ENCODE measurements at regions of chr12 and their contacts with region 1.

Region 1: DNA sequence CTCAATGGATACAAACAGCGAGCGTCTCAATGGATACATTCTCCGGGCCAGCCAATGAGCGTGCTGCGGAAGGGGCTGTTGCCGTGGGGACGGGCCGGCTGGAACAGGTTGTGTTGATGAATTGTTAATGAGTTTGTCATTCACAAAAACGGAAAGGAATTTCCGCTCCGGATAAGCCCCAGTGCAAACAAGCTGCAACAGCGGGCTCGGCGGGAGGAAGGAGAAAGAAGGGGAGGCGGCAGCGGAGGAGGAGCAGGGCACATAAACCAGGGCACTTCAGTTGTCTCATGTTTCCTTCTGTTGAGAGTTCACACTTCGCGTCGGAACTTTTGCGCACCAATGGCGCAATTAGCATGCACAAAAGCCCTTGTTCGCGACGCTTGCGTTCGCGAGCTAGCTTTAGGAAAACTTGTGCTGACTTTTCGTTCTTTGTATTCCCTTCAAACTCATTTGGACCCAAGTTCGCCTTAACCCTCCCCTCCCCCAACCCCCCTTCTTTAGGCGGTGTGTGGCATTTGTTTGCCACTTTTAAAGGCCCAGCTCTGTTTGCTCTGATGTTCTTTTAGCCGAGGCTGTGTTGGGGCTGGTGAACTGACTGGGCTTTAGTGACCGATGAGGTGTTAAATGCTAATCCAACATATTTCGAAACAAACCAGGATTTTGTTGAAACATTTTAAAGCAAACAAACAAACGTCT is at the start of gene DUSP6:
- DNase-seq: peak; percentile 100
- H3K4me3 ChIP-seq: peak within 1 kb of the TSS; percentile 85 to 93 (median 92)
- H3K27ac ChIP-seq: peak within 1 kb of the TSS; percentile 91
- H3K4me1 ChIP-seq: peaks cover 43% of the 10 kb centered on the region
- H3K27me3 ChIP-seq: no peaks in the 10 kb centered on the region
- CTCF ChIP-seq: no peak
- total RNA-seq, gene DUSP6: 190 to 291 TPM

Region 2: DNA sequence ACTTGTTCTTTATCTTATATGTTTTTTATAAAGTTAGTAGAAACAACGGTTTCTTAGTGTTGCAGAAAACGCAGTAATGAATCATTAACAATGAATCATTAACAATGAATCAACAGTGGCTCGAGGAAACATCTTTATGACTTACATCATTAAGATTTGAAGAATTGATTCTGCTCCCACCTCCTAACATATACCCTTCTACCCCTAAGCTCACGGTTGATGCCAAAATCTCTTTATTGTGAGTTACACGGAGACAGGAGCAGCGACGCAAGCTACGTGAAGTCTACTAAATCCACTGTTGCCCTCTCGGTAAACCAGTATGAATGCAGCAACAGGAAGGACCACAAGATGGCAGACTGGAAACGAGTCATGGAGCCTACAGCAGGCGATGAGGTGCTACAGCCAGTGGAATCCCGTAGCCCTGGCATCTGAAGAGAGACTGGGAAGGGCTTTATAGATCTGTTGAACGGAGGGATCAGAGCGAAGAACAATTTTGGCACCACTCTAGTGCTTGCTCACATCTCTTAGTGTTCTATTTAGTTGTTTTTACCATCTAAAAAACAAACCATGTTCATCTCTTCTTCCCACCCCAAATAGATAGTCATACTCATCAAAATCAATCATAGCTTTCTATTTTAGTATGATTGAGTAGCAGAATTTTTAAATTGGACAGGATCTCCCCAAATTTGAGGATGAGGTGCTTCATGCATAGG is 333.1 kb before region 1 on chr12:
- CTCF ChIA-PET with region 1: no interaction called
- dilution Hi-C with region 1: no loop called
- in situ Hi-C with region 1: no loop called
- intact Hi-C with region 1: loop called (anchors 1 kb)
- DNase-seq: peak; percentile 81
- H3K4me3 ChIP-seq: peak overlapping the region; percentile 18 to 49 (median 36)
- H3K27ac ChIP-seq: peak overlapping the region; percentile 57
- H3K4me1 ChIP-seq: peaks cover 16% of the 10 kb centered on the region
- H3K27me3 ChIP-seq: no peaks in the 10 kb centered on the region
- CTCF ChIP-seq: peak; percentile 92 to 93

Region 3: DNA sequence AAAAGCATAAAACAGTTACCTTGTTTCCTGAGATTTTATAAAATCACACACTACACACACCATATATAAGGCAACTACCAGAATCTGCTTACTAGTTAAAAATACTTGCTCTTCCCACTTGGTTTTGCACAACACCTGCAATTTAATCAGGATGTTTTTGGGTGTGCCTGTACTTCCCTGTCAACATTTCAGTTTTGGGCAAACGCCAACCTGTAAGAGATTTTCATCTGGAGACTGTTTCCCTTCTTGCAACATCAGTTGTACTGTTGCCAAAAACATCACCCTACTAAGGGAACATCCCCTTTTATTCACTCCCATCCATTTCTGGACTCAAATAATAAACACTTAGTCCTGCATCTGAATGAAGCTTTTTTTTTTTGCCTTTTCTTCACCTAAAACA is 172.7 kb before region 1 on chr12:
- CTCF ChIA-PET with region 1: no interaction called
- dilution Hi-C with region 1: no loop called
- in situ Hi-C with region 1: no loop called
- intact Hi-C with region 1: loop called (anchors 1 kb)
- DNase-seq: peak; percentile 97
- H3K4me3 ChIP-seq: no peak overlapping the region
- H3K27ac ChIP-seq: peak overlapping the region; percentile 81
- H3K4me1 ChIP-seq: peaks cover 41% of the 10 kb centered on the region
- H3K27me3 ChIP-seq: no peaks in the 10 kb centered on the region
- CTCF ChIP-seq: no peak

Region 4: DNA sequence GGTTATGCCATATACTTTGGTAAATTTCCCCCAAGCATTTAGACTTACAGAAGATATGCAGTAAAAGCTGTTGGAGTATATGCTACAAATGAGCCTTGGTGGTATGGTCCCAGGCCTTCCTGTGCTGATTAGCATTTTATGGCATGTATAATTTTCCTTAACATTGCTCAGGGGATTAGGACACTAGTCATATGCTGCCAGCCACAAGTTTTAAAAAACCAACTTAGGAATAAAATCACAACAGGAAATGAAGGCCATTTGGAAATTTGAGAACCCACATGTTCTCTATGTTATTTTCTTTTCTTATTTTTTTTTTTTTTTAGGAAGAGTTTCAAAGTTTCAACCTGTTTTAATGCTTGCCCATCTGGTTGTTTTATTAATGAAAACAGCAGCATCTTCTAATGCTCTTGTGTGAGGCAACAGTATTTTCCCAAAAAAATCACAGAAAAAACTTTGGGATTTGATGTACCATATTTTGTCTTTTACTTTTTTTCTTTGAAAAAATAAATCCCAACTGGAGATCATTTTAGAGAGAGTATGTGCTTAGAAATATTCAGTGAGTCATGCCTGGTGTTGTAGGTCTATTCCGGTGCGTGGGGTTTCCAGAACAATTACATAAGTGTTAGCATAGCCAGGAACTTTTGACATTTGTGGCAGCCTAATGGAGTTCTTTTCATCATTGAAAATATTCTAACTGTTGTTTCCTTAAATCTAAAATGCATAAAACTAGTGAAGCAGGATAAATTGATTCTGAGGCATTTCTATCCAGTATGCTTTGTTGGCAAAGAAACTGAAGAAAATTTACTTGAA is 21.3 kb after region 1 on chr12:
- CTCF ChIA-PET with region 1: no interaction called
- dilution Hi-C with region 1: no loop called
- in situ Hi-C with region 1: no loop called
- intact Hi-C with region 1: loop called (anchors 1 kb)
- DNase-seq: peak; percentile 81
- H3K4me3 ChIP-seq: no peak overlapping the region
- H3K27ac ChIP-seq: peak overlapping the region; percentile 95
- H3K4me1 ChIP-seq: peaks cover 80% of the 10 kb centered on the region
- H3K27me3 ChIP-seq: no peaks in the 10 kb centered on the region
- CTCF ChIP-seq: no peak

Region 5: DNA sequence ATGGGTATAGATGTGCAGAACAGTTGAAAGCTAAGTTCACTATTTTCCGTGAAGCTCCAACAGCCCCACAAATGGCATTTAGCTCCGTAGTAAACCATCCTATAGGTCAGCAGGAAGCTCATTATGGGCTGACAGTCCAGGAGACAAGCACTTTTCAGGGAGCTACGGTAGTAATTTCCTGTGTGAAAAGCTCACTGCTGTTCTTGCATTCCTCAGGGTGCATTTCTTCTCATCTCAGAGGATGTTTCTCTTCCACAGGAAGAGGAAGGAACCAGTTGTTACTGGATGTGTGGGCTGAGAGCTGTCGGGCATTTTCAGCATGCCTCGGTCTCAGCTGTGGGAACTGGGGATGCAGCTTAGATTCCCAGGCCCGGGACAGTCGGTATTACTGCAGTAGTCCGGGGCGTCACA is 99.2 kb after region 1 on chr12:
- CTCF ChIA-PET with region 1: no interaction called
- dilution Hi-C with region 1: no loop called
- in situ Hi-C with region 1: loop called (anchors 10 kb)
- intact Hi-C with region 1: no loop called
- DNase-seq: peak; percentile 74
- H3K4me3 ChIP-seq: no peak overlapping the region
- H3K27ac ChIP-seq: peak overlapping the region; percentile 85
- H3K4me1 ChIP-seq: peaks cover 30% of the 10 kb centered on the region
- H3K27me3 ChIP-seq: no peaks in the 10 kb centered on the region
- CTCF ChIP-seq: no peak